GM12878 (cell line): ENCODE measurements at regions of chr10 and their contacts with region 1.

Region 1: GRCh38 chr10:53122281-53122680 is 349.7 kb upstream of the MBL2 start:
- DNase-seq: no peak
- ATAC-seq: peak; percentile 94
- H3K4me3 ChIP-seq: no peak overlapping the region
- H3K27ac ChIP-seq: no peak overlapping the region
- H3K4me1 ChIP-seq: no peaks in the 10 kb centered on the region
- H3K27me3 ChIP-seq: no peaks in the 10 kb centered on the region
- CTCF ChIP-seq: no peak
- EP300 ChIP-seq: no peak
- POLR2A ChIP-seq: no peak
- RAD21 ChIP-seq: no peak

Region 2: DNA sequence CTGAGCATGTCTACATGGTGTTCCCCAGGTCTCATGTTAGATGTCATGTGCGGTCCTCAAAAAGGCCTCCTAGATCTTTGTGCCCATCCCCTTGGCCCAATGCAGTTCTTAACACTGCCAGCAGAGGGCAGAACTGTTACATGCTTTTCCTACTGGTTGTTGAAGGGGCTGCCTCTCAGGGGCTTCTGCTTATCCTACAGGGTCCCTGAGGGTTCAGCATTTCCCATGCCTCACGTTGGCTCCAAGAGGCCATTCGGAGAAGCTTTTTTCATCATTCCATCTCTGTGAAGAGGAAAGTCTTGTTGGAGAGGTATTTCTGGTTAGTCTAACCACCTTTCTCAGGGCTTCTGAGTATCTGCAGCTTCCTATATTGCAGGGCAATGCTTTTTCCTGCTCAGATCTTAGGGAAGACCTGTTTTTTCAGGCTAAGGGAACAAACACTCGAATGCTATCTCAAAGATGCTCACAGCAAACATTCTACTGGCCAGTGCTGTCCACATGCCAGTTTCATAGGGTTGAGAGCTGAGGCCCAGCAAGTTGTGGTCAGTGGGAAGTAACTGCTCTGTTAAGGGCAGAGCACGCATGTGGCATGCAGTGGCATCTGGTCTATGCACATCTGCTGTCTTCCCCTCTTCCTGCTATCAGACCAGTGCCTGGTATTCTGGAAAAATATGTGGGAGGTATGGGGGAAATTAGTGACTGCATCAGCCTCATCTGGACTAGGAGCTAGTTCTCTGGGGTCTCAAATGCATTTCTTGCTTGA is 381.2 kb before region 1 on chr10:
- CTCF ChIA-PET with region 1: no interaction called
- POLR2A ChIA-PET with region 1: no interaction called
- RAD21 ChIA-PET with region 1: no interaction called
- SMC1A ChIA-PET with region 1: no interaction called
- in situ Hi-C with region 1: no loop called
- intact Hi-C with region 1: no loop called
- DNase-seq: no peak
- ATAC-seq: peak; percentile 84
- H3K4me3 ChIP-seq: no peak overlapping the region
- H3K27ac ChIP-seq: no peak overlapping the region
- H3K4me1 ChIP-seq: no peaks in the 10 kb centered on the region
- H3K27me3 ChIP-seq: no peaks in the 10 kb centered on the region
- CTCF ChIP-seq: peak; percentile 76 to 95 (median 92)
- EP300 ChIP-seq: no peak
- POLR2A ChIP-seq: no peak
- RAD21 ChIP-seq: peak; percentile 66

Region 3: GRCh38 chr10:53088961-53089360 is 33.3 kb before region 1 on chr10:
- CTCF ChIA-PET with region 1: no interaction called
- POLR2A ChIA-PET with region 1: no interaction called
- RAD21 ChIA-PET with region 1: no interaction called
- SMC1A ChIA-PET with region 1: no interaction called
- in situ Hi-C with region 1: no loop called
- intact Hi-C with region 1: loop called (anchors 1 kb)
- DNase-seq: no peak
- ATAC-seq: no peak
- H3K4me3 ChIP-seq: no peak overlapping the region
- H3K27ac ChIP-seq: no peak overlapping the region
- H3K4me1 ChIP-seq: no peaks in the 10 kb centered on the region
- H3K27me3 ChIP-seq: no peaks in the 10 kb centered on the region
- CTCF ChIP-seq: no peak
- EP300 ChIP-seq: no peak
- POLR2A ChIP-seq: no peak
- RAD21 ChIP-seq: no peak

Region 4: DNA sequence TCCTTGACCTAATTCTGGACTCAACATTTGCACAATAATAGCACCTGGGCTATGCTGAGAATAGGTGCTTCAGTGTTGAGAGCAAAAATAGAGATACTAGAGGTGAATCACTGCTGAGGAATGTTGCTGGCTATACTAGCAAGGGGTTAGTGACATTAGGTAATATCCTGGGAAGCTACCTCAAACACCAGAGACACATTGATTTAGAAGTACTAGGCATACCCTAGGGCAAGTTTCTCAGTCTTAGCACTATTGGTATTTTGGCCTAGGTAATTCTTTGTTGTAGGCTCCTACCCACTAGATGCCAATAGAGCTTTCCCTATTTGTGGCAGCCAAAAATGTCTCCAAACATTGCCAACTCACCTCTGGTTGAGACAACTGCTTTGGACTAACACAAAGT is 134.3 kb after region 1 on chr10:
- CTCF ChIA-PET with region 1: no interaction called
- POLR2A ChIA-PET with region 1: no interaction called
- RAD21 ChIA-PET with region 1: no interaction called
- SMC1A ChIA-PET with region 1: no interaction called
- in situ Hi-C with region 1: no loop called
- intact Hi-C with region 1: no loop called
- DNase-seq: no peak
- ATAC-seq: no peak
- H3K4me3 ChIP-seq: no peak overlapping the region
- H3K27ac ChIP-seq: no peak overlapping the region
- H3K4me1 ChIP-seq: no peaks in the 10 kb centered on the region
- H3K27me3 ChIP-seq: no peaks in the 10 kb centered on the region
- CTCF ChIP-seq: no peak
- EP300 ChIP-seq: no peak
- POLR2A ChIP-seq: no peak
- RAD21 ChIP-seq: no peak